Mammary epithelial cell (primary cell): ENCODE measurements at regions of chr1 and their contacts with region 1.

Region 1: GRCh38 chr1:89890085-89890752 is 69.4 kb downstream of the LRRC8D start:
- DNase-seq: peak; percentile 97
- H3K4me3 ChIP-seq: peak overlapping the region in 1 of 3 experiments; percentile 30
- H3K27ac ChIP-seq: peak overlapping the region; percentile 93
- H3K4me1 ChIP-seq: peaks cover 45% of the 10 kb centered on the region
- H3K27me3 ChIP-seq: no peaks in the 10 kb centered on the region
- CTCF ChIP-seq: no peak

Region 2: GRCh38 chr1:89855413-89856123 is 34.7 kb before region 1 on chr1:
- CTCF ChIA-PET with region 1: interaction called, 6 read pairs
- dilution Hi-C with region 1: no loop called
- in situ Hi-C with region 1: no loop called
- intact Hi-C with region 1: loop called (anchors 2 kb)
- DNase-seq: peak; percentile 74
- H3K4me3 ChIP-seq: peak overlapping the region in 2 of 3 experiments; percentile 10 to 21
- H3K27ac ChIP-seq: peak overlapping the region; percentile 88
- H3K4me1 ChIP-seq: peaks cover 15% of the 10 kb centered on the region
- H3K27me3 ChIP-seq: no peaks in the 10 kb centered on the region
- CTCF ChIP-seq: no peak

Region 3: DNA sequence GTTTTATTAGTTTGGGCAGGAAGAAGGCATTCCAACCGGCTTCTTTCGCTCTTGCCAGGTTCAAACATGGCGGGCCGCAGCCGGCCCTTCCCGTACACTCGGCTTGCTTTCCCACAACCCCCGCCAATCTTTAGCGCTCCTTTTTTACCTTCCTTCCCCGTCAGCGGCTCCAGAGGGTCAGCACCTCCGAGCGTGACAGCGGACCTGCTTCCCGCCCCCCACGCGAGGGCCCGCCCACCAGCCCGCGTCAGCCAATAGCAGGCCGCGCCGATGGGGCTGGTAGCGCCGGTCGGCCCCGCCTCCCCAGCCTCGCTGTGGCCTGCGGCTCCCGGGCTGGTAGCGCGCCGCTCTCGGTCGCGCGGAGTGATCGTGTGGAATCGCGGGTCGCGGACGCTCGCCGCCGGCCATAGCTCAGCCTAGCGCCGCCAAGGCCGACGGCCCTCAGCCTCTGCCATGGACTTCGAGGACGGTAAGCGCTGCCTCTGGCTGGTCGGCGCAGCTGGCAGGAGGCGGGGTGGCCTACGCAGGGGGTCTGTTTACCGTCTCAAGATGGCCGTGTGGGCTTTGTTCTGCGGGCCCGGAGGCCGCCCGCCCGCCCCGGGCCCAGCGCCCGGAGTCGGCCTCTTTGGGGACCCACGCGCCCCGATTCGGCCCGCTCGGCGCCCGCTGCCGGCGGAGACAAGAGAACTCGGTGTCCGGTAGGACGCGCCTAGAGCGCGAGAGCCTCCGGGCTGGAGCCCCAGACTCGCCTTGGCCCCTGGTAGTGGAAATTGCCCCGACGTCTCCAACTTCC is 104.8 kb after region 1 on chr1 and contains the start of gene ZNF326:
- CTCF ChIA-PET with region 1: no interaction called
- dilution Hi-C with region 1: no loop called
- in situ Hi-C with region 1: no loop called
- intact Hi-C with region 1: loop called (anchors 5 kb)
- DNase-seq: peak; percentile 98
- H3K4me3 ChIP-seq: peak within 1 kb of the TSS; percentile 73 to 97 (median 84)
- H3K27ac ChIP-seq: peak within 1 kb of the TSS; percentile 89
- H3K4me1 ChIP-seq: peaks cover 27% of the 10 kb centered on the region
- H3K27me3 ChIP-seq: no peaks in the 10 kb centered on the region
- CTCF ChIP-seq: no peak
- total RNA-seq, gene ZNF326: 12.7 to 26.8 TPM